ENCODE measurements at regions of chr1 and their contacts with region 1.

Region 1: GRCh38 chr1:76901158-76901767 is 34.0 kb downstream of the ST6GALNAC5 start:
- DNase-seq: peak; percentile 57
- H3K4me3 Mint-ChIP-seq: no peak overlapping the region
- H3K27ac Mint-ChIP-seq: no peak overlapping the region
- H3K4me1 Mint-ChIP-seq: no peaks in the 10 kb centered on the region
- H3K27me3 Mint-ChIP-seq: no peaks in the 10 kb centered on the region

Region 2: GRCh38 chr1:77126307-77126706 is 225.0 kb after region 1 on chr1:
- CTCF ChIA-PET with region 1: no interaction called
- intact Hi-C with region 1: loop called (anchors 5 kb)
- DNase-seq: peak; percentile 36
- H3K4me3 Mint-ChIP-seq: no peak overlapping the region
- H3K27ac Mint-ChIP-seq: no peak overlapping the region
- H3K4me1 Mint-ChIP-seq: no peaks in the 10 kb centered on the region
- H3K27me3 Mint-ChIP-seq: no peaks in the 10 kb centered on the region